ENCODE measurements at regions of chr10 and their contacts with region 1.

Region 1: GRCh38 chr10:25113191-25114035 is 61.4 kb upstream of the GPR158 start:
- DNase-seq: peak; percentile 80

Region 2: DNA sequence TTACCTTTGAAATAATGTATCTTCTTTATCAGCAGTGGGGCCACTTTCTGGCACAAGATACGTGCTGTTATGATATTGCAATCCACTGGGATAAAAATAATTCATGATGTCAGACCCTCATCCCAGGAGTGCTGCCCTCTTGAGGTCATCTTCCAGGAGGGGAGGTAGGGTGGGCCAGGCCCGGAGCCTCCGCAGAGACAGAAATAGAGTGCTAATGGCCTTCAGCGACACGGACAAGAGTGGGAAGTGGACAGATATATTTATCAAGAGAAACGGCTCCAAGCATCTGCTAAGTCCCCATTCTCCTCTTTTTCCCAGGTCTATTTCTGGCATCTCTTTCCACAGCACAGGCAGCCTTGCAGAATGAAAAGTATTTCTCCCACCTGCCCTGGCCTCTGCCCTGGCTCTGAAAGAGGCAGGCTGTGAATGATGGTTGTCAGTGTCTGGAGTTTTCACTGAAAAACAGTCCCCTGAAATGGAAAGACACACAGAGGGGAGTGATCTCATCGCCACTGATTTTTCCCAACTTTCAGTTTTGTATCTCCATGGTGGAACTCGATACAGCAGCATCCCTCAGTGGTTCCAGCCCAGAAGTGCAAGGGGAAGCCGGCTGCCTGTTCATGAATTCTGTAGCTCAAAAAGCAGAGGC is 568.9 kb after region 1 on chr10:
- intact Hi-C with region 1: loop called (anchors 2 kb)
- DNase-seq: no peak